MCF 10A (cell line): ENCODE measurements at regions of chr11 and their contacts with region 1.

Region 1: GRCh38 chr11:111454561-111455192 is 57.5 kb downstream of the BTG4 start:
- DNase-seq: peak; percentile 63
- H3K4me3 Mint-ChIP-seq: no peak overlapping the region
- H3K27ac Mint-ChIP-seq: no peak overlapping the region
- H3K4me1 Mint-ChIP-seq: peaks cover 6% of the 10 kb centered on the region
- H3K27me3 Mint-ChIP-seq: peaks cover 17% of the 10 kb centered on the region
- CTCF ChIP-seq: peak; percentile 81

Region 2: DNA sequence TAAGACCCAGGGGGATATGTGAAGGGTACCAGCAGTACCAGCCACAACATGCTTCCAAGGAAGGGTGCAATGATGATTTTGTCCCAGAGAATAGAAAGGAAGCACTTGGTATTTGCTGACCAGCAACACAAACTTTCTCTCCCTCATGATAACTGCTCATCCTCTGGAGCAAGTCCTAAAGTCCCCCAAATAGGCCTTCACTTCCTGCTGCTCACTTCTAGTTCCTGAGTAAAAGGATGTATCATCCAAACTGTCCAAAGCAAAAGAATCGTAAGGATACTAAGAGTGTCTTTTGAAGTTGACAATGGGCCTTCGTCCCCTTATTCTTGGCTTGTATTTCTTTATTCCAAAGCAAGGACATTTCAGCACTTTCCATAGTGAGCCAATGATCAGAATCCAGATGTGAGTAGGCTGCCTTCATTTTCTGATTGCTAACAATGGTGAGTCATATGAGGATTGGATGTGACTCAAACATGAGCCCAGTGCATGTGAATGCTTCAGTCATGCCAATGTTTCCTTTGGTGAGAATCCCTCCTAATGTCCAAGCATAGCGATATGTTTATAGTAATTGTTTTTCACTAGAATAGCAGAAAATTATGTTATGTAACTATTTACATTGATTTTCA is 452.6 kb before region 1 on chr11:
- CTCF ChIA-PET with region 1: no interaction called
- POLR2A ChIA-PET with region 1: no interaction called
- intact Hi-C with region 1: no loop called
- DNase-seq: peak; percentile 72
- H3K4me3 Mint-ChIP-seq: no peak overlapping the region
- H3K27ac Mint-ChIP-seq: no peak overlapping the region
- H3K4me1 Mint-ChIP-seq: no peaks in the 10 kb centered on the region
- H3K27me3 Mint-ChIP-seq: no peaks in the 10 kb centered on the region
- CTCF ChIP-seq: no peak

Region 3: GRCh38 chr11:111429066-111429506 is 25.6 kb before region 1 on chr11:
- CTCF ChIA-PET with region 1: interaction called, 12 read pairs
- POLR2A ChIA-PET with region 1: no interaction called
- intact Hi-C with region 1: no loop called
- DNase-seq: peak; percentile 82
- H3K4me3 Mint-ChIP-seq: no peak overlapping the region
- H3K27ac Mint-ChIP-seq: no peak overlapping the region
- H3K4me1 Mint-ChIP-seq: peaks cover 22% of the 10 kb centered on the region
- H3K27me3 Mint-ChIP-seq: no peaks in the 10 kb centered on the region
- CTCF ChIP-seq: peak; percentile 74

Region 4: GRCh38 chr11:111531687-111532364 is 77.1 kb after region 1 on chr11:
- CTCF ChIA-PET with region 1: interaction called, 5 read pairs
- POLR2A ChIA-PET with region 1: interaction called, 4 read pairs
- intact Hi-C with region 1: loop called (anchors 2 kb)
- DNase-seq: peak; percentile 86
- H3K4me3 Mint-ChIP-seq: no peak overlapping the region
- H3K27ac Mint-ChIP-seq: no peak overlapping the region
- H3K4me1 Mint-ChIP-seq: peaks cover 14% of the 10 kb centered on the region
- H3K27me3 Mint-ChIP-seq: no peaks in the 10 kb centered on the region
- CTCF ChIP-seq: no peak

Region 5: DNA sequence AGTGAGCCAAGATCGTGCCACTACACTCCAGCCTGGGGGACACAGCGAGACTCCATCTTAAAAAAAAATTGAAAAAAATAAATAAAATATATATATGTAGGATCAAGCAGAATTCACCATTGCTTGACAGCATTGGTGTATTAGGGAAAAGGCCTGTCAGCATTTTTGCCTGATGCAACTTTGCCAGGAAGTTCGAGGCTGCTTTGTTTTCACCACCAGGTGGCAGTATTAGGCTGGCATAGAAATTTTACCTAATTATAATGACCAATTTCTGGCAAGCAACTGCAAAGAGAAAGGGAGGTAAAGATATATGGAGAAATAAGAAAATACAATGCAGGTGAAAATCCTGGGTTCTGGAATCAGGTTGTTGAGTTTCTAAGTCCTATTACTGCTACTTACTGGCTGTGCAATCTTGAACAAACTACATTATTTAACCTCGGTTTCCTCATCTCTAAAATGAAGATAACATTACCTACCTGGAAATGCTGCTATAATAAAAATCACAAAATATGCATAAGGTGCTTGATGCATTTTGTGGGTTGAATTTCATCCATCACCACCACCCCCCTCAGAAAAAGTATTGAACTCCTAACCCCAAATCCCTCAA is 110.5 kb after region 1 on chr11:
- CTCF ChIA-PET with region 1: interaction called, 12 read pairs
- POLR2A ChIA-PET with region 1: no interaction called
- intact Hi-C with region 1: loop called (anchors 1 kb)
- DNase-seq: peak; percentile 75
- H3K4me3 Mint-ChIP-seq: no peak overlapping the region
- H3K27ac Mint-ChIP-seq: no peak overlapping the region
- H3K4me1 Mint-ChIP-seq: peaks cover 13% of the 10 kb centered on the region
- H3K27me3 Mint-ChIP-seq: no peaks in the 10 kb centered on the region
- CTCF ChIP-seq: peak; percentile 70

Region 6: GRCh38 chr11:111623527-111624030 is 168.9 kb after region 1 on chr11:
- CTCF ChIA-PET with region 1: no interaction called
- POLR2A ChIA-PET with region 1: no interaction called
- intact Hi-C with region 1: no loop called
- DNase-seq: no peak
- H3K4me3 Mint-ChIP-seq: no peak overlapping the region
- H3K27ac Mint-ChIP-seq: no peak overlapping the region
- H3K4me1 Mint-ChIP-seq: no peaks in the 10 kb centered on the region
- H3K27me3 Mint-ChIP-seq: no peaks in the 10 kb centered on the region
- CTCF ChIP-seq: no peak

Region 7: GRCh38 chr11:111777094-111778046 is 322.7 kb after region 1 on chr11:
- CTCF ChIA-PET with region 1: interaction called, 29 read pairs
- POLR2A ChIA-PET with region 1: no interaction called
- intact Hi-C with region 1: loop called (anchors 1 kb)
- DNase-seq: peak; percentile 79
- H3K4me3 Mint-ChIP-seq: no peak overlapping the region
- H3K27ac Mint-ChIP-seq: no peak overlapping the region
- H3K4me1 Mint-ChIP-seq: no peaks in the 10 kb centered on the region
- H3K27me3 Mint-ChIP-seq: no peaks in the 10 kb centered on the region
- CTCF ChIP-seq: peak; percentile 54